ENCODE measurements at regions of chr4 and their contacts with region 1.

Region 1: GRCh38 chr4:38759113-38759789 is 23.5 kb downstream of the TLR10 start:
- DNase-seq: peak; percentile 48
- CTCF ChIP-seq: peak; percentile 51

Region 2: GRCh38 chr4:38663801-38664705 is 95.2 kb before region 1 on chr4 and contains the start of gene KLF3:
- in situ Hi-C with region 1: no loop called
- DNase-seq: peak; percentile 89
- CTCF ChIP-seq: no peak

Region 3: DNA sequence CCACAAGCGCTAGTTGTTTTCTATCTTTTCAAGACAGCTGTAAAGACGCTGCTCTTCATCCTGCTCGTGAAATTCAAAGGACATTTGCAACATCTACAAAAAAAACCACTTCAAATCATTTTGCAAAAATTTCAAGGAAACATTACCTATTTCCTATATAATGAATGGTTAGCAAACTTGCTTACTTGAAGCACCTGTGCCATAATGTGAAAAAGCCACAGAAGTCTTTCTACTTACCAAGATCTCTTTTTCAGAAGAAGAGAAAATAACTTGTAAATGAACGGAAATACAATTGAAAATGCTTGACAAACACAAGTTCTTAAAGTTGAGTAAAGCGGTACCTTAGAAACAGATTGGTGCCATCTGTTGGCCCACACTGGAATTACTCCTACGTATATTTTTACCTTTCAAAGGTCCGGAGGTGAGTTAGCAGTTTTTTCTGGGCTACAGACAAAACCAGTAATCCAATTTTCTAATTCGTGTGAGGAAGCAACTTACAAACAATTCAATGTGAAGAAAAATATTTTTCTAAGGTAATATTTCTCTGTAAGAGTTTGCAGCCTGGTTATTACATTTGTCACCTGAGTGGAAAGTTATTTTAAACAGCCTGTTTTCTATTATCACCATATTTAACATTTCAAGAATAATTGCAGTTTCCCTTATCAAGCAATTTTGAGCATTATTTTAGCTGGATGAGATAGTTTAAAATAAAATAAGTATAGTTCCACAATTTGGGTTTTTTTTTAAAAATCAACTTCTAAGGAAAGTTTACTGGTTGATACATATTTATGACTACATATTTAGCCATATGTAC is 97.5 kb after region 1 on chr4 and contains the start of gene TLR6:
- in situ Hi-C with region 1: loop called (anchors 5 kb)
- DNase-seq: peak; percentile 54
- CTCF ChIP-seq: peak; percentile 54

Region 4: GRCh38 chr4:39134683-39135319 is 375.6 kb after region 1 on chr4:
- in situ Hi-C with region 1: loop called (anchors 10 kb)
- DNase-seq: peak; percentile 18
- CTCF ChIP-seq: no peak